ENCODE measurements at regions of chr4 and their contacts with region 1.

Region 1: GRCh38 chr4:94451695-94452475 is at the start of gene PDLIM5:
- DNase-seq: peak; percentile 88
- H3K4me3 ChIP-seq: peak within 1 kb of the TSS; percentile 82
- H3K27ac ChIP-seq: peak within 1 kb of the TSS; percentile 94
- H3K4me1 ChIP-seq: peaks cover 28% of the 10 kb centered on the region
- H3K27me3 ChIP-seq: no peaks in the 10 kb centered on the region
- CTCF ChIP-seq: no peak
- total RNA-seq, gene PDLIM5: 174 and 183 TPM in 2 replicates

Region 2: DNA sequence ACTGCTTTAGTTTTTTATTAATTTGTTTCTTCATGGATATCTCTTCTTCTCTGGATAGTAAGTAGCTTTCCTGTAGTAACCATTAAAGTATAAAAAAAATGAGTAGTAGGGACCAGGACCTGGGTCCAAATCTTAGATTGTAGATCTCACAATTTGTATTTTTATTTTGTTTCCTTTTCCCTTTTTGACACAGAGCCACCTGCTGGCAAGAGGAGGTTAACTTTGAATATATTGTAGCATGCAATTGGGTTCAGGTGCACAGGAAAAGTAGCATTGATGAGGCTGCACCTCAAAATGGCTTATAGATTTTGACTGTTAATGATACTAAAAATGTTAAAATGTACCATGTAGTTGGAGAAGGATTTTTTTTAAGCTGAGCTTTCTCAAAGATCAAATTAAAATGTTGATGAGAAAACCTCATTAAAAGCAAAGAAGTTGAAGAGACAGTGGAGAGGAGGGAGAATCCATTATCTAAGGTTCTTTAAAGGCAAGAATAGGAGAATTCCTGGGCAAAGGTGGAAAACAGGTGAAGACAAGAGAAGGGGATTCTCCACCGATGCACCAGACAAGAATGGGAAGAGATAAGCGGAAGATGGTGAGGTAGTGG is 61.0 kb before region 1 on chr4:
- CTCF ChIA-PET with region 1: no interaction called
- POLR2A ChIA-PET with region 1: no interaction called
- intact Hi-C with region 1: no loop called
- DNase-seq: peak; percentile 11
- H3K4me3 ChIP-seq: no peak overlapping the region
- H3K27ac ChIP-seq: no peak overlapping the region
- H3K4me1 ChIP-seq: no peaks in the 10 kb centered on the region
- H3K27me3 ChIP-seq: no peaks in the 10 kb centered on the region
- CTCF ChIP-seq: peak; percentile 53

Region 3: GRCh38 chr4:94577136-94577535 is 125.3 kb after region 1 on chr4:
- CTCF ChIA-PET with region 1: no interaction called
- POLR2A ChIA-PET with region 1: no interaction called
- intact Hi-C with region 1: loop called (anchors 5 kb)
- DNase-seq: peak; percentile 91
- H3K4me3 ChIP-seq: peak overlapping the region; percentile 12
- H3K27ac ChIP-seq: peak overlapping the region; percentile 77
- H3K4me1 ChIP-seq: peaks cover 53% of the 10 kb centered on the region
- H3K27me3 ChIP-seq: no peaks in the 10 kb centered on the region
- CTCF ChIP-seq: no peak

Region 4: GRCh38 chr4:94595879-94596483 is 144.1 kb after region 1 on chr4:
- CTCF ChIA-PET with region 1: no interaction called
- POLR2A ChIA-PET with region 1: no interaction called
- intact Hi-C with region 1: loop called (anchors 1 kb)
- DNase-seq: peak; percentile 61
- H3K4me3 ChIP-seq: no peak overlapping the region
- H3K27ac ChIP-seq: peak overlapping the region; percentile 62
- H3K4me1 ChIP-seq: peaks cover 21% of the 10 kb centered on the region
- H3K27me3 ChIP-seq: no peaks in the 10 kb centered on the region
- CTCF ChIP-seq: peak; percentile 51

Measured in A673 (cell line).